ENCODE measurements at regions of chr1 and their contacts with region 1.

Region 1: GRCh38 chr1:112706908-112707663 is at the start of gene RHOC:
- DNase-seq: peak; percentile 86
- H3K4me3 ChIP-seq: peak within 1 kb of the TSS; percentile 70 to 87 (median 80)
- H3K27ac ChIP-seq: peak within 1 kb of the TSS; percentile 85
- H3K4me1 ChIP-seq: peaks cover 44% of the 10 kb centered on the region
- H3K27me3 ChIP-seq: no peaks in the 10 kb centered on the region
- CTCF ChIP-seq: peak; percentile 73 to 98
- total RNA-seq, gene RHOC: 383 to 495 TPM

Region 2: DNA sequence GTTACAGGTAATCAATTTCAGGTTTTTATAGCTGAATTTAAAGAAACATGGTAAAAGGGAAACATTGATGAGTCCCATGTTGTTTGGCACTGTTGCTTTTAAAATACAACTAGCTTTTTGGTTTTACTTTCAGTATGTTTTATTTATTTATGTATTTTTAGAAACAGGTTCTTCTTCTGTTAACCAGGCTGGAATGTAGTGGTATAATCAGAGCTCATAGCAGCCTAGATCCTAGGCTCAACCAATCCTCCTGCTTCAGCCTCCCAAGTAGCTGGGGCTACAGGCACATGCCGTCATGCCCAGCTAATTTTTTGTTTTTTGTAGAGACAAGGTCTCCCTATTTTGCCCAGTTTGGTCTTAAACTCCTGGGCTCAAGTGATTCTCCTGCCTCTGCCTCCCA is 260.7 kb before region 1 on chr1:
- CTCF ChIA-PET with region 1: interaction called, 13 read pairs
- dilution Hi-C with region 1: no loop called
- in situ Hi-C with region 1: no loop called
- intact Hi-C with region 1: no loop called
- DNase-seq: no peak
- H3K4me3 ChIP-seq: no peak overlapping the region
- H3K27ac ChIP-seq: no peak overlapping the region
- H3K4me1 ChIP-seq: no peaks in the 10 kb centered on the region
- H3K27me3 ChIP-seq: no peaks in the 10 kb centered on the region
- CTCF ChIP-seq: no peak

Region 3: DNA sequence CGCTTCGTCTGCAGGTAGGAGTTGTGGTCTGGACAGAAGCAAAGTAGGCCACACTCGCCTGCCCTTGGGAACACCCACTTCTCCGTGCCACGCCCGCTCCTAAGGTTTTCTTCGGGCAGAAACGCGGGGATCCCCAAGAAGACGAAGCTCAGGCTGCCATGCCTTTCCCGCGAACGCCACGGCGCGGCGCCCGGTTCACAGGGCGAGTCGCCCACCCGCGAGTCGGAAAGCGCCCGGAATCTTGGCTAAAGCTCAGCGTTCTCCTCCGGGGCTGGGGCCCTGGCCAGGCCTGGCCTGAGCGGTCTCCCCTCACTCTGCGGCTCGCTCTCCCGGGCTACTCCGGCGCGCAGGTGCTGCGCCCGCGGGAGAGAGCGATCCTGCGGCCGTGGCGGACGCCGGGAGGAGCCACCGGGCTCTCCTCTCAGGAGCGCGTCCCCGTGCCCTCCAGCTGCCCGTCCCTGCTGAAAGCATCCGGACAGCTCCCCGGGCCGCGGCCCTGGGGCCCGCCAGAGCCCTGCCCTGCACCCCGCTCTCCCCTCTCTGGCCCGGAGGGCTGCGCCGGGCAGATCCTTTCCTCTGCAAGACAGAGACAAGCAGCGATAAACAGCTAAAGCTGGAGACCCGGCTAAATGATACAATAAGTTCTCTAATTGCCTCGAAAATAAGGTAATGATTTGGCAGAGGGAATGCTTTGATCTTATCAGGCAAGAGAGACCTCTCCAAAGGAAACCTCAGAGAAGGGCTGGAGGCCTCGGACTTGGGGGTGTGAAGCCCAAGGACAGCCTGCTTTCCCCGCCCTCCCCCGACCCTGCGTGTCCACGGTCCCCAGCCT is 205.1 kb before region 1 on chr1:
- CTCF ChIA-PET with region 1: interaction called, 7 read pairs
- dilution Hi-C with region 1: no loop called
- in situ Hi-C with region 1: loop called in 1 of 2 experiments (anchors 10 kb)
- intact Hi-C with region 1: loop called (anchors 1 kb)
- DNase-seq: peak; percentile 69
- H3K4me3 ChIP-seq: peak overlapping the region; percentile 54 to 57 (median 56)
- H3K27ac ChIP-seq: no peak overlapping the region
- H3K4me1 ChIP-seq: peaks cover 5% of the 10 kb centered on the region
- H3K27me3 ChIP-seq: no peaks in the 10 kb centered on the region
- CTCF ChIP-seq: peak; percentile 33 to 87

Region 4: DNA sequence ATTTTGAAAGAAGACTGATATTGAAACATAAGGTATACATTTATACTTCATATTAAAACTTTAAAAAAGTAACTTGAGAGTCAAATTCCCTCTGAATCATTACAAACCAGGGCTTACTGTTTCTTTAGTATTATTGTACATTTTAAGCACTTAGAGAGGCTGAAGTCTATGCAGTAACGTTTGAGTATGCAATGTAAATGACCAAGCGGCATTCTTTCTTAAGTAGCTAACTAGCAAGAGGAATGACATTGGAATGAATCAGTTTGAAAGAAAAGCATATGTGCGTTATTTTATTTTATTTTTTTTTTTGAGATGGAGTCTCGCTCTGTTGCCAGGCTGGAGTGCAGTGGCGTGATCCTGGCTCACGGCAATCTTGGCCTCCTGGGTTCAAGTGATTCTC is 174.1 kb before region 1 on chr1:
- CTCF ChIA-PET with region 1: no interaction called
- dilution Hi-C with region 1: no loop called
- in situ Hi-C with region 1: no loop called
- intact Hi-C with region 1: no loop called
- DNase-seq: no peak
- H3K4me3 ChIP-seq: no peak overlapping the region
- H3K27ac ChIP-seq: no peak overlapping the region
- H3K4me1 ChIP-seq: no peaks in the 10 kb centered on the region
- H3K27me3 ChIP-seq: no peaks in the 10 kb centered on the region
- CTCF ChIP-seq: no peak

Region 5: GRCh38 chr1:112557385-112557784 is 149.7 kb before region 1 on chr1:
- CTCF ChIA-PET with region 1: interaction called, 13 read pairs
- dilution Hi-C with region 1: no loop called
- in situ Hi-C with region 1: no loop called
- intact Hi-C with region 1: no loop called
- DNase-seq: no peak
- H3K4me3 ChIP-seq: no peak overlapping the region
- H3K27ac ChIP-seq: no peak overlapping the region
- H3K4me1 ChIP-seq: no peaks in the 10 kb centered on the region
- H3K27me3 ChIP-seq: no peaks in the 10 kb centered on the region
- CTCF ChIP-seq: no peak

Region 6: DNA sequence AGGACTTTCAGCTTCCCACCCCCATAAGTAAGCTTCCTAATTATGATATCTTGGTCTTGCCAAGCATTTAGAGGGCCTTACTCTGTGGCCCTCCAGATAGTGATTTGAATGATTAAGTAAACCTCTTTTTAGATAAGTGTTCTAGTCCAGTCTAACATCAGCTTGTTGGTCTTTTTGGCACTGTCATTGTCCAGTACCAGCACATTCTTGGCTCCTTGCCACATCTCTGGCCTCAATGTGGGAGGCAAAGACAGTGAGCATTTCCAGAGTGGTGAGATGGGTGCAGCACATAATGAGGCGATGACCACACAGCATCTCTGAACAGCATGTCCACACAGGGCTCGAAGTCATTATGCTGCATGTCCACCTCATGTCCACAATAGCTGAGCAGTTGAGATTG is 81.4 kb before region 1 on chr1:
- CTCF ChIA-PET with region 1: interaction called, 3 read pairs
- dilution Hi-C with region 1: loop called (anchors 5 kb)
- in situ Hi-C with region 1: no loop called
- intact Hi-C with region 1: loop called (anchors 2 kb)
- DNase-seq: peak; percentile 19
- H3K4me3 ChIP-seq: no peak overlapping the region
- H3K27ac ChIP-seq: no peak overlapping the region
- H3K4me1 ChIP-seq: peaks cover 26% of the 10 kb centered on the region
- H3K27me3 ChIP-seq: no peaks in the 10 kb centered on the region
- CTCF ChIP-seq: no peak

Region 7: DNA sequence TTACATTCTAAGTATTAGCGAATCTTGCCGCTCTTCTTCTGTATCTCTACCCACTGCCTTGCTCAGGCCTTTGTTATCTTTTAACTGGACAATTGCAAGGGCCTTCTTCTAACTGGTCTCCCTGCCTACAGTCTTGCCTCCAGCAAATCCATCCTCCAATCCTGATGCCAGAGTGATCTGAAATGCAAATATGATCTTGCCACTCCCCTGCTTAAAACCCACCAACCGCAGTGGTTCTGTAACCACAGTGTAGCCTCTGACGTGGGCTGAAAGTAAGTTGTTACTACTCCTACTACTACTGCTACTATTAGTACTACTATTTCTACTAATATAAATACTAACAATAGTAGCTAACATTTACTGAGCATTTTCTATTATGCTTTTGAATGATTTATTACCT is 20.3 kb before region 1 on chr1:
- CTCF ChIA-PET with region 1: no interaction called
- dilution Hi-C with region 1: no loop called
- in situ Hi-C with region 1: no loop called
- intact Hi-C with region 1: loop called (anchors 1 kb)
- DNase-seq: peak; percentile 42
- H3K4me3 ChIP-seq: no peak overlapping the region
- H3K27ac ChIP-seq: peak overlapping the region; percentile 91
- H3K4me1 ChIP-seq: peaks cover 27% of the 10 kb centered on the region
- H3K27me3 ChIP-seq: no peaks in the 10 kb centered on the region
- CTCF ChIP-seq: no peak

Measured in mammary epithelial cell (primary cell).